ENCODE measurements at regions of chr5 and their contacts with region 1.

Region 1: DNA sequence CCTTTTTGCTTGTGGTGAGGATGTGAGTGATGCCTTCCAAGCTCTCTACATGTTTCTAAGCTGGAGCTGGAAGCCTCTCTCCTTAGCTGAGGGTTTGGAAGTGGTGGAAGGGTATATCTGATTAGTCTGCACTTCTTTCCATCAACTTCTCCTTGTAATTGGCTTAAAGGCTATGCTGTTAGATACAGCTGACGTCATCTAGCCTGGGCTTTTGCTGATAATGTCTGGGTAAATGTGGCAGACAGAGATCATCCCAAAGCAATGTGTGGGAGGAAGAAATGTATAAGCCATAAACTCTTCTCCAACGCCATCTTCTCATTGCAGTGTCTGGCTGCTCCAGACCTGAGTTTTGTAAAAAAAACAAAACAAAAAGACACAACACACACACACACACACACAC is 29.3 kb downstream of the ZNF354C start:
- DNase-seq: no peak
- ATAC-seq: no peak
- H3K4me3 ChIP-seq: no peak overlapping the region
- H3K27ac ChIP-seq: no peak overlapping the region
- H3K4me1 ChIP-seq: no peaks in the 10 kb centered on the region
- H3K27me3 ChIP-seq: no peaks in the 10 kb centered on the region
- CTCF ChIP-seq: no peak

Region 2: GRCh38 chr5:178931846-178932760 is 157.4 kb before region 1 on chr5:
- intact Hi-C with region 1: no loop called
- DNase-seq: no peak
- ATAC-seq: no peak
- H3K4me3 ChIP-seq: no peak overlapping the region
- H3K27ac ChIP-seq: no peak overlapping the region
- H3K4me1 ChIP-seq: no peaks in the 10 kb centered on the region
- H3K27me3 ChIP-seq: no peaks in the 10 kb centered on the region
- CTCF ChIP-seq: no peak

Region 3: DNA sequence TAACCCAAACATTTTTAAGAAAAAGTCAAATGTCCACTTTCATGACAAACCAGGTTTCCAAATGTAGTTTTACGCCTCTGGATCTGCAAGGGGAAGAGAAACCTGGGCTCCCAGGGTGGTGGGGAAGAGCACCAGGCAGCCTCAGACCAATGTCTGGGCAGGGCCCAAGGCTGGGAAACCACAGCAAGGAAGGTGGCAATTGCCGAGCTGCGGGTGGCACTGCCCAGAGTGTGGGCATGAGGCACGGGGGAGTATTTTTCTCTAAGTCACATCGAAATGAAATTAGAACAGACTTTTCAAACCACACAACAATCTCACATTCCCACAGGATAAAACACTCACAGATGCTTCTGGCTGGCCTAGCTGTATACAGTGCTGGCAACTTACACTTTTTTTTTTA is 1152.1 kb after region 1 on chr5:
- intact Hi-C with region 1: loop called in 1 of 2 experiments (anchors 10 kb)
- DNase-seq: no peak
- ATAC-seq: no peak
- H3K4me3 ChIP-seq: no peak overlapping the region
- H3K27ac ChIP-seq: no peak overlapping the region
- H3K4me1 ChIP-seq: no peaks in the 10 kb centered on the region
- H3K27me3 ChIP-seq: no peaks in the 10 kb centered on the region
- CTCF ChIP-seq: no peak